Right ventricle myocardium inferior (tissue), 1 donor: ENCODE measurements at regions of chr1 and their contacts with region 1.

Region 1: DNA sequence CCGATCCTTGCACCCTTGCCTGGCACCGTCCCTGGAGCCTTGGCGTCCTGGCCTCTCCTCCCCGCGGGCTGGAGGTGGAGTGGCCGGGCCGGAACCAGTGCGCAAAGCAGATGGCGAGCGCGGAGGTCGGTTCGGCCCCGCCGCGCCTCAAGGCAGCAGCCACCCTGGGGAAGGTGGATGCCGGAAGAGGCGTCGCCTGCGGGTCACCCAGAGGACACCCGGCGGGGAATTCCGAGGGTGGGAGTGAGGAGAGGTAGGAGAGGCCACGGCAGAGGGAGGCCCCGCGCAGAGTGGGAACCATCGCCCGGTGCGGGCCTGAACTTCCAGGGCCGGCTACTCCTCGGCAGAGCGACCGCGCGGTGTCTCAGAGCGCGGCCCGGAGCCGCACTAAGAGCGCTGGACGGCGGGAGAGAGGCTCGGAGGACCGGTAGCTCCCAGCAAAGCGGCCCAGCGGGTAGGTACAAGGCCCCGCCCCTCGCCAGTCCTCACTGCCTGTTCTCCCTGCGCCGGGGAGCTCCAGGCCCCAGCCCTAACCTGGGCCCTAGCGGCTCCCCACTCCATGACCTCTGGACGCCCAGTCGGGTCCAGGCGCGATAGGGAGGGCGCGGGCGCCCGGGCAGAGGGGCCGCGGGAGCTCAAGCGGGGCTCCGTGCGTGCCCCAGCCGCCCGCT is at the start of gene RNF207:
- DNase-seq: peak; percentile 75
- ATAC-seq: peak; percentile 65
- total RNA-seq, gene RNF207: 54.6 TPM

Region 2: GRCh38 chr1:5992026-5992813 is 213.8 kb before region 1 on chr1 and contains the start of gene NPHP4:
- intact Hi-C with region 1: loop called (anchors 5 kb)
- DNase-seq: peak; percentile 100
- ATAC-seq: peak; percentile 97
- total RNA-seq, gene NPHP4: 4.8 TPM

Region 3: GRCh38 chr1:6185635-6186382 is 20.2 kb before region 1 on chr1:
- intact Hi-C with region 1: no loop called
- DNase-seq: no peak
- ATAC-seq: no peak

Region 4: GRCh38 chr1:6222636-6223035 is 16.7 kb after region 1 on chr1:
- intact Hi-C with region 1: loop called (anchors 2 kb)
- DNase-seq: peak; percentile 81
- ATAC-seq: peak; percentile 70

Region 5: GRCh38 chr1:6235296-6235677 is 29.3 kb after region 1 on chr1:
- intact Hi-C with region 1: loop called (anchors 1 kb)
- DNase-seq: no peak
- ATAC-seq: no peak

Region 6: GRCh38 chr1:6245086-6245868 is 39.3 kb after region 1 on chr1:
- intact Hi-C with region 1: loop called (anchors 1 kb)
- DNase-seq: peak; percentile 88
- ATAC-seq: peak; percentile 78

Region 7: DNA sequence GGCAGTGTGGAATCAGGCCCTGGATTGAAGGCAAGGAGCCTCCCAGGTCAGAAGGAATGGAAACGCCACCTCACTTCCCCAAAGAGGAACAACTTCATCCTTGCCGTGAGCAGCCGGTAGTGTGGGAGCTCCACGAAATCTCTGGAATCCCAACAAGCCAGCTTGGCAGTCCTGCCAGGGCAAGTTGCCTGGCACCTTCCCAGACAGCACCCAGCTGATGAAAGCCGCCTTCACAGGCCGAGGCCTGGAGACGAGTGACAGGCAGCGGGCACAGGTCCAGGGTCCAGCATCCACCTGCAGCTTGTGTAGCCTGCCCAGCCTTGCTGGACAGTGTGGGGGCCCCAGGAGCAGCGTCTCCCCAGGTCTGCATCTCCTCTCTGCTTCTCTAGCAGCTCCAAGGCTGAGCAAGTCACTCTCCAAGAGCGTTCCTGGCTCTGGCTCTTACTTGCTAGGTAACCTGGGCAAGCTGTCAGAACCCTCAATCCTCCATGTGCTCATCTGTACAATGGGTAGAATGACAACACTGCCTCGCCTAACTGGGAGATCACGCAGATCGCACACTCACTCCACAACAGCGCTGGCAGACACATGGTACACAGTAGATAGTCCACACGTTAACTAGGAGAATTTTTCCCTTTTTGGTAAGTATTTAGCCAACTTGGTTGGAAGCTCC is 144.6 kb after region 1 on chr1:
- intact Hi-C with region 1: loop called (anchors 5 kb)
- DNase-seq: peak; percentile 85
- ATAC-seq: peak; percentile 47